Heart right ventricle (tissue), 16 donors: ENCODE measurements at regions of chr2 and their contacts with region 1.

Region 1: DNA sequence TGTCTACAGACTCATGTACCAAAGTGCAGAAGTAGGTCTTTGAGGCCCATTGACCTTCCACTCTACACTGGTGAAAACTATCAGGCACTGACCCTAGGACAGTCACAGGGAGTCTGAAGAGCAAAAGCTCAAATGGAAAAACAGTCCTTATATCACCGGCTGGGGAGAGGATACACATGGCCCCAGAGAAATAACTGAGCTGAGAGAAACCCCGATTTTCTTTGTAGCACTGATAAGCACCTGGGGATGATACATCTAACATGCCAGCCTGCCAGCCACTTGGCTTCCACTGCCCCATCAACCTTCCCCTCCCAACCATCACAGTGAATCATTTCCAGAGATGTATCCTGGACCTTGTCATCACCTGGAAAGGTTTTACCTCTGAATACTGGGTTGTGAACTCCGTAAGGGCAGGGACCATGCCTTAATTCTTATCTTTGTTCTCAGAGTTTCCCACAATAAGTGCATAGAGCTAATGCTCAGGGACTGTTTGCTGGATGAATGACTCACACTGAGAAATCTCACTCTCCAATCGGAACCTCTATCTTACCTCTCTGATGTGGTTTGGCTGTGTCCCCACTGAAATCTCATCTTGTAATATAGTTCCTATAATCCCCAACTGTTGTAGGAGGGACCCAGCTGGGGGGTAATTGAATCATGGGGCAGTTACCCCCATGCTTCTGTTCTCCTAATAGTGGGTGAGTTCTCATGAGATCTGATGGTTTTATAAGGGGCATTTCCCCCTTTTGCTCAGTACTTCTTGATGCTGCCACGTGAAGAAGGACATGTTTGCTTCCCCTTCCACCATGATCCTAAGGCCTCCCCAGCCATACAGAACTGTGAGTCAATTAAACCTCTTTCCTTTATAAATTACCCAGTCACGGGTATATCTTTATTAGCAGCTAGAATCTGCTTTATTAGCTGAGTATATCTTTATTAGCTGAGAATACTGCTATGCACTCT is 37.1 kb downstream of the EVA1A start:
- DNase-seq: no peak
- ATAC-seq: no peak
- H3K4me3 ChIP-seq: no peak overlapping the region
- H3K27ac ChIP-seq: no peak overlapping the region
- H3K4me1 ChIP-seq: no peaks in the 10 kb centered on the region
- H3K27me3 ChIP-seq: peaks cover 0 to 2% (median 0%) of the 10 kb centered on the region in 7 donors
- CTCF ChIP-seq: no peak

Region 2: DNA sequence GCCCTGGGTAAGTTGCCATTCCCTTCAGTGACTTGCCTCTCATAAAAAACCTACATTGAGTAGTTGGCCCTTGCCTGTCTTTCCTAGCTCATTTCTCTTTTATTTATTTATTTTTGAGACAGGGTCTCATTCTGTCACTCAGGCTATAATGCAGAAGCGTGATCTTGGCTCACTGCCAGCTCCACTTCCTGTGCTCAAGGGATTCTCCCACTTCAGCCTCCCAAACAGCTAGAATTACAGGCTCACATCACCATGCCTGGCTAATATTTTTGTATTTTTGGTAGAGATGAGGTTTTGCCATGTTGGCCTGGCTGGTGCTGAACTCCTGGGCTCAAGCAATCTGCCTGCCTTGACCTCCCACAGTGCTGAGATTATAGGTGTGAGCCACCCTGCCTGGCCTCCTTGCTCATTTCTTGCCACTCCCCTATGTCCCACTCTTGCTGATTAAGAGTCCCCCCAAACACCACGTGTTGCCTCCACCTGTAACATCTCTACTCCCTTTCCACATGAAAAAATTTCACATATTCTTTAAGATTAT is 24.5 kb after region 1 on chr2:
- intact Hi-C with region 1: loop called in 1 of 10 experiments (anchors 1 kb)
- DNase-seq: no peak
- ATAC-seq: no peak
- H3K4me3 ChIP-seq: no peak overlapping the region
- H3K27ac ChIP-seq: no peak overlapping the region
- H3K4me1 ChIP-seq: no peaks in the 10 kb centered on the region
- H3K27me3 ChIP-seq: peaks cover 0 to 4% (median 0%) of the 10 kb centered on the region in 7 donors
- CTCF ChIP-seq: no peak